ENCODE measurements at regions of chr16 and their contacts with region 1.

Region 1: GRCh38 chr16:3106205-3106928 is 6.0 kb upstream of the ZNF205 start:
- DNase-seq: peak; percentile 93
- H3K4me3 Mint-ChIP-seq: peak overlapping the region; percentile 71
- H3K27ac Mint-ChIP-seq: peak overlapping the region; percentile 88
- H3K4me1 Mint-ChIP-seq: peaks cover 48% of the 10 kb centered on the region
- H3K27me3 Mint-ChIP-seq: peaks cover 21% of the 10 kb centered on the region

Region 2: DNA sequence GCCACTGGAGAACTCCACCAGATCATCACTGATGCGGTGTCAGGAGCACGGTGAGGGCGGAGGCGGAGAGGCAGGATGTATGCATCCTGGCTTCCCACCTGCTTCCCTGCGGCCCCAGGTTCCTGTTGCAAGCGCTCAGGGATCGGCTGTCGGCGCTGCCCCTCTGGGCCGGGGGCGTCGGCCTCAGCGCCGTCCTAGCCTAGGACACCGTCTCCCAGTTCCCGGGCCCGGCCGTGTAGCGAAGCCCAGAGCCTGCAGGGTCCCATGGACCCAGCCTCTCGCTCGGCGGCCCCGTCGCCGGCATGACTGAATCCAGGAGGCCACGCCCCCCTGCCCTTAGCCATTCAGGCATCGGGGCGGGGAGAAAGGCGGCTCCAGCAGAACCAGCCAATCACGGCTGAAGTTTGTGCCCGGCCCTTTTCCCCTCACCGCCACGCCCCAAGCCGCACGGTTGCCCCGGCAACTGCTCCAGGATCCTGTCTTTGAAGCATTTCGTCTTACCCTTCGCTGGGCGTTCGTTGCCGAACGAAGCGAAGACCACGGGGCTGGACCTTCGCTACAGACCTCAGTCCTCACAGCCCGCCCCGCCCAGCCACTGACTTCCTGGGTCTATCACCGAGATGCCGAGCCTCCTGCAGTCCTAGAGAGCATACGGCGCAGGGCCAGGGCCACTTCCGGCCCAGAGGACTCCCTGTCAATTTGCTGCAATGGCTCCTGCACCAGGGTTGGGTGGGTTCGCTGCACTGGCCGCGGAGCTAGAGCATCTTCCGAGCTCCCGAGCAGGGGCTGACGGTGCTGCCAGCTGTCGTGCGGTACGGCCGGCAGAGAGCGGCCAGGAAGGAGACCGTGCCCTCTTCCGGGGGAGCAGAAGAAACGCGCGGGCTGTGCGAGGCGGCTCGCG is 17.9 kb after region 1 on chr16:
- CTCF ChIA-PET with region 1: interaction called, 200 read pairs
- DNase-seq: peak; percentile 99
- H3K4me3 Mint-ChIP-seq: peak overlapping the region; percentile 93
- H3K27ac Mint-ChIP-seq: peak overlapping the region; percentile 98
- H3K4me1 Mint-ChIP-seq: peaks cover 57% of the 10 kb centered on the region
- H3K27me3 Mint-ChIP-seq: peaks cover 8% of the 10 kb centered on the region